ENCODE measurements at regions of chr17 and their contacts with region 1.

Region 1: GRCh38 chr17:48878918-48879898 is 13.4 kb upstream of the ATP5MC1 start:
- DNase-seq: peak in 2 of 5 donors; percentile 34 to 57
- H3K4me3 ChIP-seq: no peak overlapping the region
- H3K27ac ChIP-seq: no peak overlapping the region
- H3K4me1 ChIP-seq: no peaks in the 10 kb centered on the region
- H3K27me3 ChIP-seq: no peaks in the 10 kb centered on the region
- CTCF ChIP-seq: peak; percentile 61 to 82 (median 80)
- EP300 ChIP-seq: no peak
- POLR2A ChIP-seq: no peak

Region 2: GRCh38 chr17:48671697-48672171 is 207.5 kb before region 1 on chr17:
- intact Hi-C with region 1: loop called in 3 of 4 experiments (anchors 5 kb)
- DNase-seq: peak; percentile 66 to 88 (median 80)
- H3K4me3 ChIP-seq: no peak overlapping the region
- H3K27ac ChIP-seq: no peak overlapping the region
- H3K4me1 ChIP-seq: no peaks in the 10 kb centered on the region
- H3K27me3 ChIP-seq: no peaks in the 10 kb centered on the region
- CTCF ChIP-seq: peak in 2 of 3 donors; percentile 69 to 71
- EP300 ChIP-seq: no peak
- POLR2A ChIP-seq: no peak

Region 3: DNA sequence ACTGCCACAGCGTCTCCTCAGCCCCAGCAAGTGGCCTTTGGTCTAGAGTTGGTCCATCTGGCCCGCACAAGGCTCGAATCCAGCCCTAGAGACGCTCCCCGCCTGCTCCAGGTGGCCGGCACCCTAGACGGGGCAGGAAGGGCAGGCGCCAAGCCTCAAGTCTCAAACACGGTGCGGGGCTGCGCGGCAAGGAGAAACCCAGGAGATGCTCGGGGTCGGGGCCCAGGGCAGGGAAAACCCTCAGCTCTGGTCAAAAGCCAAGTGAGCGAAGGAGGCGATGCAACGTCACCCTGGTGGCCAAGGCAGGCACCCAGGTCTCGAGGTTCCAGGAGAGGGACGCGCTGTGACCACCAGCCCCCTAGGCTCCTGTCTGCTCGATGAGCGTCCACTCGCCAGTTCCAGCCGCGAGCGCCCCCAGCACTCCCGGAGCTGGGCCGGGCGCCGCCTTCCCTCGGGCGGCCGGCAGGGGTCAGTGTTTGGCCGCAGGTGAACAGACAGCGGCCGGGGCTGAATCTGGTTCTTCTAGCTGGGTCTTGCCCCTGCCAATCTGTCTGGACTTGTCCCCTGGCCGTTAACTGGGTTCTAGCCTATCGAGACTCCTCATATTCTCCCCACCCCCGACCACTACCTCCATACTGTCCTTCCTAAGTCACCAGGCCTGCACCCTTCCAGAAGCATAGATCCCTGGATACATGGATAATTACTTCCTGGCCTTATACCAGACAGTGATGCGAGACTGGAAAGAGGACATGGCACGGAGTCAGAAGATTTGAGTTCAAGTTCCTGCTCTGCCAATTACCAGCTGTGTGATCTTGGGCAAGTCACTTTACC is 200.9 kb before region 1 on chr17:
- intact Hi-C with region 1: loop called in 3 of 4 experiments (anchors 5 kb)
- DNase-seq: peak; percentile 12 to 59 (median 22)
- H3K4me3 ChIP-seq: no peak overlapping the region
- H3K27ac ChIP-seq: no peak overlapping the region
- H3K4me1 ChIP-seq: peaks cover 4% of the 10 kb centered on the region
- H3K27me3 ChIP-seq: no peaks in the 10 kb centered on the region
- CTCF ChIP-seq: peak; percentile 7 to 39 (median 23)
- EP300 ChIP-seq: no peak
- POLR2A ChIP-seq: no peak

Region 4: GRCh38 chr17:48724251-48725003 is 154.8 kb before region 1 on chr17:
- intact Hi-C with region 1: loop called in 3 of 4 experiments (anchors 5 to 10 kb)
- DNase-seq: peak; percentile 66 to 88 (median 74)
- H3K4me3 ChIP-seq: no peak overlapping the region
- H3K27ac ChIP-seq: no peak overlapping the region
- H3K4me1 ChIP-seq: no peaks in the 10 kb centered on the region
- H3K27me3 ChIP-seq: peaks cover 3% of the 10 kb centered on the region
- CTCF ChIP-seq: peak in 2 of 3 donors; percentile 24 to 33
- EP300 ChIP-seq: no peak
- POLR2A ChIP-seq: no peak

Region 5: DNA sequence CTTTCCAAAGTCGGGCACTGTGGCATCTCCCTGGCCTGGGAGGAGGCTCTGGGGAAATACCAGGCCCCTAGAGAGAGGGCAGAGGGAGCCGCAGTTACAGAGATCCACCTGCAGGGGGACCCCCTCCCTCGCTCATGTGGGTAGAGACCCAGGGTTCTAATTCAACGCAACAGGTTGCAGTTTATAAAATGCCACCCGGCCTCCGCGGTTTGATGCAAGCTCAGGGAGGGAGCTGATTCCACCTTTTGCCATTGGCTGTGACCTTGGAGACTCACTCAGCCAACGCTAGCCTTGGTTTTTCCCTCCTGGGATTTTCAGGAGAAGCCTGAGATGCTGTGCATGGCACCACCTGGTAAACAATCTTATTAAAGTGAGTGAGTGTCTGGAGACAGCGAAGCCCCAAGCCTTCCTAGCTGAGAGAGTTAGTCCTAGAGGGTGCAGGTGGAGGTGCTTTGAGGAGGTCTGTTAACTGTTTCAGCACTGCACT is 74.2 kb before region 1 on chr17:
- intact Hi-C with region 1: loop called (anchors 5 kb)
- DNase-seq: peak; percentile 25 to 66 (median 62)
- H3K4me3 ChIP-seq: no peak overlapping the region
- H3K27ac ChIP-seq: no peak overlapping the region
- H3K4me1 ChIP-seq: no peaks in the 10 kb centered on the region
- H3K27me3 ChIP-seq: no peaks in the 10 kb centered on the region
- CTCF ChIP-seq: peak; percentile 71 to 82 (median 77)
- EP300 ChIP-seq: no peak
- POLR2A ChIP-seq: no peak

Region 6: GRCh38 chr17:48816774-48817590 is 62.2 kb before region 1 on chr17 and contains the start of gene TTLL6:
- intact Hi-C with region 1: loop called in 2 of 4 experiments (anchors 5 kb)
- DNase-seq: peak; percentile 73 to 86 (median 80)
- H3K4me3 ChIP-seq: peak within 1 kb of the TSS; percentile 44
- H3K27ac ChIP-seq: no peak within 1 kb of the TSS
- H3K4me1 ChIP-seq: peaks cover 6% of the 10 kb centered on the region
- H3K27me3 ChIP-seq: no peaks in the 10 kb centered on the region
- CTCF ChIP-seq: no peak
- EP300 ChIP-seq: no peak
- POLR2A ChIP-seq: no peak
- total RNA-seq, gene TTLL6: 0.17 to 3.8 (median 0.52) TPM in 4 of 7 donors, not detected in the others